Left ventricle myocardium inferior (tissue), 1 donor: ENCODE measurements at regions of chr9 and their contacts with region 1.

Region 1: GRCh38 chr9:33167046-33167808 is at the start of gene B4GALT1:
- DNase-seq: peak; percentile 98
- H3K4me3 ChIP-seq: peak within 1 kb of the TSS; percentile 99
- H3K27ac ChIP-seq: peak within 1 kb of the TSS; percentile 99
- H3K4me1 ChIP-seq: peaks cover 76% of the 10 kb centered on the region
- H3K27me3 ChIP-seq: no peaks in the 10 kb centered on the region
- CTCF ChIP-seq: no peak
- total RNA-seq, gene B4GALT1: 37.1 TPM

Region 2: GRCh38 chr9:33081128-33081851 is 85.9 kb before region 1 on chr9:
- intact Hi-C with region 1: loop called (anchors 2 kb)
- DNase-seq: peak; percentile 28
- H3K4me3 ChIP-seq: no peak overlapping the region
- H3K27ac ChIP-seq: peak overlapping the region; percentile 59
- H3K4me1 ChIP-seq: peaks cover 34% of the 10 kb centered on the region
- H3K27me3 ChIP-seq: no peaks in the 10 kb centered on the region
- CTCF ChIP-seq: peak; percentile 83

Region 3: DNA sequence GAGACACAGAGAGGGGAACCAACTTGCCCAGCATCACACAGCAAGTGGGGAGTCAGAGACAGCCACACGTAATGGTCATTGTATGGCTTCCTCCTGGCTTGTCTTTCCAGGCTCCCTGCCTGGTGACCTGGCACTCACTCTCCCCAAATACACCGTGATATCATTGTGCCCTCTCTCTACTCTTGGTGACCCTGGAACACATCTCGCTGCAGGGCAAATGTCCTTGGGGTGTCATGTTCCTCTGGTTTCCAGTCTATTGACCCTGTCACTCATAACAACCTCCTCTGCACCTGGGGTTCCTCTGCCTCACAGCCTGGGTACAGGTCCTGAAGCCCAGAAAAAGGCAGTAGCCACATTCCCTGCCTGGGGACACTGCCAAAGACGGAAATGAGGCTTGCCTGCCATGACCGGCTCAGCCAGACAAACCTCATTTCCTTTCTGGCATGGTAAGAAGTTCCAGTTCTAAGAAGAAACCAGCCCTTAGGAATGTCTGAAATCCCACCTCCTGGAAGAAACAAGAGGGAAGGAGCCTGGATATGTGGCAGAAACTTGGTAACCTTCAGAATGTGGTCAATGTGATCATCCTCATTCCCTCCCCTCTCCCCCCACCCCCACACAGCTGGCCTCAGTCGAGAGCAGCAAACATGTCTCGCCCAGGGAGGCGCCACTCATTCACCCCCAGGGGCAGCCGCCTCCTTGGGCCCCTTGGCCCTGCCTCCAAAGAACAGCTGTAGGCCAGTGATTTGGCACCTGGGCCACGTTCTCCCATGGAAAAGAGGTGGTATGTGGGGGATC is 60.2 kb before region 1 on chr9:
- intact Hi-C with region 1: loop called (anchors 10 kb)
- DNase-seq: peak; percentile 58
- H3K4me3 ChIP-seq: peak overlapping the region; percentile 2
- H3K27ac ChIP-seq: peak overlapping the region; percentile 85
- H3K4me1 ChIP-seq: peaks cover 61% of the 10 kb centered on the region
- H3K27me3 ChIP-seq: no peaks in the 10 kb centered on the region
- CTCF ChIP-seq: no peak